ENCODE measurements at regions of chr17 and their contacts with region 1.

Region 1: GRCh38 chr17:7513850-7514419 is 29.8 kb downstream of the POLR2A start:
- DNase-seq: no peak
- ATAC-seq: peak in 1 of 2 donors; percentile 46

Region 2: GRCh38 chr17:7549401-7550055 is 35.6 kb after region 1 on chr17:
- intact Hi-C with region 1: no loop called
- DNase-seq: peak; percentile 34
- ATAC-seq: peak; percentile 66 to 72

Region 3: DNA sequence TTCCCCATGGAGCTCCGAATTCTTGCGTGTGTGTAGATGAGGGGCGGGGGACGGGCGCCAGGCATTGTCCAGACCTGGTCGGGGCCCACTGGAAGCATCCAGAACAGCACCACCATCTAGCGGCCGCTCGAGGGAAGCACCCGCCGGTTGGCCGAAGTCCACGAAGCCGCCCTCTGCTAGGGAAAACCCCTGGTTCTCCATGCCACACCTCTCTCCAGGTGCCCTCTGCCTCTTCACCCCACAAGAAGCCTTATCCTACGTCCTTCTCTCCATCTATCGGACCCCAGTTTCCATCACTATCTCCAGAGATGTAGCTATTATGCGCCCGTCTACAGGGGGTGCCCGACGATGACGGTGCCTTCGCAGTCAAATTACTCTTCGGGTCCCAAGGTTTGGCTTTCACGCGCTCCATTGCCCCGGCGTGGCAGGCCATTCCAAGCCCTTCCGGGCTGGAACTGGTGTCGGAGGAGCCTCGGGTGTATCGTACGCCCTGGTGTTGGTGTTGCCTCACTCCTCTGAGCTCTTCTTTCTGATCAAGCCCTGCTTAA is 47.2 kb after region 1 on chr17:
- intact Hi-C with region 1: loop called (anchors 5 kb)
- DNase-seq: peak; percentile 93
- ATAC-seq: peak; percentile 76 to 83